Activated CD4-positive, alpha-beta memory T cell treated with anti-CD3 and anti-CD28 coated beads for 36 hours (primary cell): ENCODE measurements at regions of chrX and their contacts with region 1.

Region 1: GRCh38 chrX:14886252-14886651 is 13.0 kb downstream of the MOSPD2 start:
- DNase-seq: no peak
- H3K4me3 Mint-ChIP-seq: no peak overlapping the region
- H3K27ac Mint-ChIP-seq: no peak overlapping the region
- H3K4me1 Mint-ChIP-seq: peaks cover 35% of the 10 kb centered on the region
- H3K27me3 Mint-ChIP-seq: no peaks in the 10 kb centered on the region

Region 2: GRCh38 chrX:14899607-14900006 is 13.4 kb after region 1 on chrX:
- CTCF ChIA-PET with region 1: interaction called, 3 read pairs
- POLR2A ChIA-PET with region 1: no interaction called
- intact Hi-C with region 1: loop called (anchors 2 kb)
- DNase-seq: no peak
- H3K4me3 Mint-ChIP-seq: no peak overlapping the region
- H3K27ac Mint-ChIP-seq: no peak overlapping the region
- H3K4me1 Mint-ChIP-seq: peaks cover 3% of the 10 kb centered on the region
- H3K27me3 Mint-ChIP-seq: no peaks in the 10 kb centered on the region